Heart left ventricle (tissue), 16 donors: ENCODE measurements at regions of chr3 and their contacts with region 1.

Region 1: GRCh38 chr3:64405211-64405835 is 180.1 kb upstream of the PRICKLE2 start:
- DNase-seq: no peak
- ATAC-seq: no peak
- H3K4me3 ChIP-seq: no peak overlapping the region
- H3K27ac ChIP-seq: no peak overlapping the region
- H3K4me1 ChIP-seq: no peaks in the 10 kb centered on the region
- H3K27me3 ChIP-seq: peaks cover 0 to 8% (median 0%) of the 10 kb centered on the region in 9 donors
- CTCF ChIP-seq: no peak
- POLR2A ChIP-seq: no peak

Region 2: GRCh38 chr3:64019271-64019670 is 386.1 kb before region 1 on chr3:
- intact Hi-C with region 1: no loop called
- DNase-seq: no peak
- ATAC-seq: no peak
- H3K4me3 ChIP-seq: no peak overlapping the region
- H3K27ac ChIP-seq: no peak overlapping the region
- H3K4me1 ChIP-seq: peaks cover 5 to 40% (median 26%) of the 10 kb centered on the region in 12 donors
- H3K27me3 ChIP-seq: no peaks in the 10 kb centered on the region
- CTCF ChIP-seq: no peak
- POLR2A ChIP-seq: no peak

Region 3: DNA sequence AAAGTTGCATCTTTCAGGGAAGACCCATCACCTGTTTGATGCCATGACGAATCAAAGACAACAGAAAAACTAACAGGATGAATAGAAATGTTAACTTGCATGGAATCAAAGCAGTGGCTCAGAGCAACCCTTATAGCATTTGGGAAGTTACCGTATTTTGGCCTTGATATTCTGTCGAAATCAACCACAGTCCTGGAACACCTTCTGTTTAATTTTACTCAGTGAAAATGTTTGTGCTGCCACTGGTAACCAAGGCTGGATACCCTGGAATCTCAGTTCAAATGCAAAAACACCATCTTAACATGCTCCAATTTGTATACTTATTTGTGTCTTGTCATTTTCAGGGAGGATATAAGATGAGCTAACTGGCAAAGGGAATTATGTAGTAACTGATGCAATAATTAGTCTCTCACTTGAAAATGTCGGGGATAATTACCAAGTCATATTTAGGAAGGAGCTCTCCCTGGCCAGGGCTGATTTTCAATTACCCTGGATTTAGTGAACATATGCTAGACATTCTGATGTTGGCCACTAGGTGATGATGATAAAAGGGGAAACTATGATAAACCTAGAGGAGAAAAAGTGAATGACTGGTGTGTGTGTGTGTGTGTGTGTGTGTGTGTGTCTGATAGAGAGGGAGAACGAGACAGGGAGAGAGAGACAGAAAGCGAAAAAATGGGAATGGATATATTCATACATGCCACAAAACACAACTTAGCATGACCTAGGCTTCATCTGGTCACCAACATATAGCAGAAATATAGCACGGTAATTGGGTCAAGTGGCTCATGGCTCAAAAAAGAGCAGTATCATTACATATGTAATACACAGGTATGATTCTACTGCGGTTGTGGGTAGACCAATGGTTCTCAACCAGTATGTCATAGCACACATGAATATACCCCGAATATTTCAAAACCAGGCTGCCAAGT is 161.0 kb before region 1 on chr3:
- intact Hi-C with region 1: loop called in 1 of 10 experiments (anchors 10 kb)
- DNase-seq: no peak
- ATAC-seq: no peak
- H3K4me3 ChIP-seq: no peak overlapping the region
- H3K27ac ChIP-seq: peak overlapping the region in 1 of 12 donors; percentile 9
- H3K4me1 ChIP-seq: peaks cover 0 to 32% (median 10%) of the 10 kb centered on the region in 12 donors
- H3K27me3 ChIP-seq: no peaks in the 10 kb centered on the region
- CTCF ChIP-seq: peak in 3 of 12 donors; percentile 7 to 24 (median 14)
- POLR2A ChIP-seq: no peak

Region 4: DNA sequence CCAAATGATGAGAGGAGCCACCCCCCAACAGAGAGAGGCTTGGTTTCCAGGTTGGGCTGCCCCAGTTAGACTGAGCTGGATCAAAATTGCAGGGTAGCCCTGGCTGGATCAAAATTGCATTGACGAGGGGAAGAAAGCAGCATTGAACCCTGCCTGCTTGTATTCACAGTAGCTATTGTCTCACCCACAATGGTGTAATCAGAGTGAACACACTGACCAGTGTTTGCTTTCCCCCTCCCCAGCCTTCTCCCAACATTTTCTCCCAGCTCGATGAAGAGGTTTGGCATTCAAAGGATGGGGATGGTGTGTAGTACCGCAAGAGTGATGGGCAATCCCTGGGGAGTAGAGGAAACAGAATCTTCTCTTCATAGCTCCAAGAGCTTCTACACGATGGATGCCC is 58.7 kb after region 1 on chr3:
- intact Hi-C with region 1: loop called in 1 of 10 experiments (anchors 2 kb)
- DNase-seq: no peak
- ATAC-seq: no peak
- H3K4me3 ChIP-seq: no peak overlapping the region
- H3K27ac ChIP-seq: no peak overlapping the region
- H3K4me1 ChIP-seq: peaks cover 0 to 13% (median 0%) of the 10 kb centered on the region in 12 donors
- H3K27me3 ChIP-seq: peaks cover 0 to 3% (median 0%) of the 10 kb centered on the region in 9 donors
- CTCF ChIP-seq: no peak
- POLR2A ChIP-seq: no peak

Region 5: GRCh38 chr3:64484289-64484992 is 79.1 kb after region 1 on chr3:
- intact Hi-C with region 1: loop called in 3 of 10 experiments (anchors 5 to 10 kb)
- DNase-seq: peak; percentile 67 to 82 (median 70)
- ATAC-seq: peak; percentile 83 to 94 (median 94)
- H3K4me3 ChIP-seq: no peak overlapping the region
- H3K27ac ChIP-seq: no peak overlapping the region
- H3K4me1 ChIP-seq: peaks cover 0 to 13% (median 1%) of the 10 kb centered on the region in 12 donors
- H3K27me3 ChIP-seq: peaks cover 0 to 2% (median 0%) of the 10 kb centered on the region in 9 donors
- CTCF ChIP-seq: peak; percentile 76 to 95 (median 88)
- POLR2A ChIP-seq: no peak